Dendritic cell treated with granulocyte-macrophage colony-stimulating factor and Interleukin-4, amounts not matched to agents 40 ng/mL and 50 ng/mL, for 4 days (primary cell): ENCODE measurements at regions of chr4 and their contacts with region 1.

Region 1: DNA sequence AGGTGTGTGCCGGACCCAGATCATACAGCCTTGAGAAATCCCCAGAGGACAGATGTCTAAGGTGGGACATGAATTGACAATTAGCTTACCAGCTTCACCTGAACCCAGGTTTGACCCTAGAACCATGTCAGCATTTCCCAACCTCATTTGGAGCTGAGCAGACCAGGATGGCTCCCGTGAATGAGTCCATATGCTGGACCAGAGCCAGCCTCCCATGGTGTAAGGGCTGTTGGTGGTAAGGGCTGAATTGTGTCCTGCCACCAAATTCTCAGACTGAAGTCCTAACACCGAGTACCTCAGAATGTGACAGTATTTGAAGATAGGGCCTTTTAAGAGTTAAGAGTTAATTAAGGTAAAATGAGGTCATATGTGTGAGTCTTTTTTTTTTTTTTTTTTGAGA is 88.3 kb downstream of the SLC34A2 start:
- H3K4me3 Mint-ChIP-seq: no peak overlapping the region
- H3K27ac Mint-ChIP-seq: no peak overlapping the region
- H3K4me1 Mint-ChIP-seq: no peaks in the 10 kb centered on the region
- H3K27me3 Mint-ChIP-seq: peaks cover 2% of the 10 kb centered on the region

Region 2: DNA sequence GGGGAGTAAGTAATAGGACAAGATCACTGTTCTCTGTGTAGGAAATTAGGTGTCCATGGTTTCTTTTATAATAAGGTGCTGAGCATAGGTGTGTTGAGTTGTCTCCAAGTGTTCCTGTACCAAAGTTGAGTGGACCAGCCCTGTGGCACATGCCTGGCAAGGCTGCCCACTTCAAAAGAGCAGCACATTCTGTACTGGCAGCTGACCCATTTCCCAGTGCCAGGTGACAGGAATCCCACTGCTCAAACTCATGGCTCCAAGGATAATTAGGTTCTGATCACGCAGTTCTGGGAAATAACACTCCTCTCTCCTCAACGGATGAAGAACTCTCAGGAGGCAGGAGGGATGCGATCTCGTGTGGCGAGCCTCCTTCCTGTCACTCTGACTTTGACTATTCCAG is 700.4 kb before region 1 on chr4:
- intact Hi-C with region 1: no loop called
- H3K4me3 Mint-ChIP-seq: no peak overlapping the region
- H3K27ac Mint-ChIP-seq: no peak overlapping the region
- H3K4me1 Mint-ChIP-seq: no peaks in the 10 kb centered on the region
- H3K27me3 Mint-ChIP-seq: peaks cover 27% of the 10 kb centered on the region

Region 3: DNA sequence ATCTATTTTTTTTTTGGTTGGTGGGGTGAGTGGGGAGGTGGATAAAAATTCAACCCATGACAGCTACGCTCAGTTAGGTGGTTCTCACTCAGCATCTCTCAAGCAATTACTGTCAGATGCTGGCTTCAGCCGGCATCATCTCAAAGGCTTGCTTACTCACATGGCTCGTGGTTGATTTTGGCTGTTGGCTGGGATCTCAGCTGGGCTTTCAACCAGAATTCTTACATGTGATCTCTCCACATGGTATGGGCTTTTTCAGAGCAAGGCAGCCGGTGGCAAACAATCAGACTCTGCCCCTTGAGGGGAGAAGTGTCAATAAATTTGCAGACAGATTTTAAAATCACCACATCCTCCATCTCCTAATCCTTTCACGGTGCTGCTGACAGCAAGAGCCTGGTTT is 41.1 kb before region 1 on chr4:
- intact Hi-C with region 1: loop called (anchors 1 kb)
- H3K4me3 Mint-ChIP-seq: no peak overlapping the region
- H3K27ac Mint-ChIP-seq: no peak overlapping the region
- H3K4me1 Mint-ChIP-seq: no peaks in the 10 kb centered on the region
- H3K27me3 Mint-ChIP-seq: no peaks in the 10 kb centered on the region

Region 4: DNA sequence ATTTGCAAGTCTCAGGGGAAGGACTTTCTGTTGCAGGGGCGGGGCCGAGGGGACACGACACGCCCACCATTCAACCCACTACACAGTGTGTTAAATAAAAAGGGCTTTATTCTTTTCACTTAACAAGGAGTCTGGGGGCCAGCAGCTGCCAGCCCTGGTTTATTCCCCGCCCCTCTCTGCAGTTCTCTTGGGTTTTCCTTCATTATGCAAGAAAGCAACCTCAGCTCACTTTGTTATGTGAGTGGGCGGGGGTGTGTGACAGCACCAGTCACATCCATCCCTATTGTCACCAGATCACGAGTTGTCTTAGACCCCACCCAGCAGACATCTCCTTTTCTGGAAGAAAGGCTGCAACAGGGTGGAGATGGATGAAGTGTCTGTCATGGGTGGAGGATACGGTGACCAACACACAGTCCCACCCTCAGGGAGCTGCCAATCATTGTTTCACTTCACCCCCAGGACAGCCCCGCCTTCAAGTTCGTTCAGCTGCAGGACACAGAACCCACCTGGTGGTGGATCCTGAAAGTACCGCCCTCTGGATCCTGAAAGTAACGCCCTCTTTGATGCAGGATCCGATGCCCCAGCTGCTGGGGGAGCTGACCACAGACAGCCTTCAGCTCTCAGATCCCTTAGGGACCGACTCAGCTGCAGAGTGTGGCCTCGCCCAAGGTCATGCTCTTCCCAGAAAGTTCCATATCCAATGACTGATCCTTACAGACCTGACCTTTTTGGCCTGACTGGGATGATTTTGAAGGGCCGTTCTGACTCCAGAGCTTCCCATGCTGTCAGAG is 249.6 kb after region 1 on chr4:
- intact Hi-C with region 1: no loop called
- H3K4me3 Mint-ChIP-seq: no peak overlapping the region
- H3K27ac Mint-ChIP-seq: peak overlapping the region; percentile 76
- H3K4me1 Mint-ChIP-seq: peaks cover 68% of the 10 kb centered on the region
- H3K27me3 Mint-ChIP-seq: peaks cover 2% of the 10 kb centered on the region